ENCODE measurements at regions of chrX and their contacts with region 1.

Region 1: GRCh38 chrX:1453951-1454785 is 1.5 kb upstream of the ASMTL start:
- DNase-seq: peak; percentile 82 to 94 (median 89)
- ATAC-seq: peak; percentile 26
- H3K4me3 ChIP-seq: no peak overlapping the region
- H3K4me3 Mint-ChIP-seq: peak overlapping the region; percentile 49 to 93 (median 68)
- H3K27ac ChIP-seq: peak overlapping the region; percentile 99
- H3K27ac Mint-ChIP-seq: peak overlapping the region in 8 of 9 donors; percentile 68 to 90 (median 80)
- H3K4me1 ChIP-seq: peaks cover 24 to 41% of the 10 kb centered on the region in 2 donors
- H3K4me1 Mint-ChIP-seq: peaks cover 3 to 29% (median 24%) of the 10 kb centered on the region in 7 donors
- H3K27me3 ChIP-seq: no peaks in the 10 kb centered on the region
- H3K27me3 Mint-ChIP-seq: peaks cover 0 to 2% (median 0%) of the 10 kb centered on the region in 5 donors

Region 2: GRCh38 chrX:386768-387575 is 1067.2 kb before region 1 on chrX and contains the start of gene PPP2R3B:
- CTCF ChIA-PET with region 1: no interaction called
- POLR2A ChIA-PET with region 1: no interaction called
- intact Hi-C with region 1: loop called in 1 of 2 experiments (anchors 2 kb)
- DNase-seq: peak; percentile 98 to 100 (median 99)
- ATAC-seq: peak; percentile 93
- H3K4me3 ChIP-seq: peak within 1 kb of the TSS; percentile 99
- H3K4me3 Mint-ChIP-seq: peak within 1 kb of the TSS; percentile 84 to 96 (median 93)
- H3K27ac ChIP-seq: peak within 1 kb of the TSS; percentile 100
- H3K27ac Mint-ChIP-seq: peak within 1 kb of the TSS; percentile 96 to 99 (median 99)
- H3K4me1 ChIP-seq: peaks cover 4 to 5% of the 10 kb centered on the region in 2 donors
- H3K4me1 Mint-ChIP-seq: peaks cover 0 to 20% (median 9%) of the 10 kb centered on the region in 7 donors
- H3K27me3 ChIP-seq: no peaks in the 10 kb centered on the region
- H3K27me3 Mint-ChIP-seq: peaks cover 0 to 5% (median 0%) of the 10 kb centered on the region in 5 donors
- total RNA-seq, gene PPP2R3B: 24.9 to 53.5 (median 32.5) TPM

Region 3: DNA sequence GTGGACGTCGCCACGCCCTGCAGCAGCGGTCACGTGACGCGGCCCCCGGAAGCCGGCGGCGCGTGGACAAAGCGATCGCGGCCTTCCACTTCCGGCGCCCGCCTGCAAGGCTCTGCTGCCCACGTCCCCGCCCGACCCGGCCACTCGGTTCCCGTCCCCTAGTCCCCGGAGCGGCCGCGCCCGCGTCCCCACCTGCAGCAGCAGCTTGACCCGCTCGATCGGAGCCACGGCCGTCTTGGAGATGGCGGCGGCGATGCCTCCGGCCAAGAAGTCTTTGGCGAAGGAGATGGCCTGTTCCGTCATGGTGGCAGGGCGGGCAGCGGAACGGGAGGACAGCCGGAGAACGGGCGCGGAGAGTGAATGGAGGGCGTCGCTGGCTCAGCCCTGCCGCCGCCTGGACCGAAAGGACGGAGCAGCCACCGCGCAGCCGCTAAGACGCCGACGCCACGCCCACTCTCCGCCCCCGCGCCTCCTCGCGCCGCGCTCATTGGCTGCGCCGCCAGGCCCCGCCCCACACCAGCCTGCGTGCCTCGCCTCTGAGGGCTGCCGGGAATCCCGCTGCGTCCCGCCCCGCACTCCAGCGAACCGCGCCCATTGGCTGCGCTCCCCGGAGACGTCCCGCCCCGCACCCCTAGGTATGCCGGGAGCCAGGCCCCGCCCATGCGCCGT is 62.3 kb before region 1 on chrX and contains the start of gene SLC25A6:
- CTCF ChIA-PET with region 1: no interaction called
- POLR2A ChIA-PET with region 1: no interaction called
- intact Hi-C with region 1: loop called (anchors 1 kb)
- DNase-seq: peak; percentile 97 to 100 (median 100)
- ATAC-seq: peak; percentile 96
- H3K4me3 ChIP-seq: peak within 1 kb of the TSS; percentile 94
- H3K4me3 Mint-ChIP-seq: peak within 1 kb of the TSS; percentile 78 to 95 (median 92)
- H3K27ac ChIP-seq: peak within 1 kb of the TSS; percentile 97
- H3K27ac Mint-ChIP-seq: peak within 1 kb of the TSS; percentile 84 to 98 (median 91)
- H3K4me1 ChIP-seq: peaks cover 25 to 33% of the 10 kb centered on the region in 2 donors
- H3K4me1 Mint-ChIP-seq: peaks cover 35 to 71% (median 52%) of the 10 kb centered on the region in 7 donors
- H3K27me3 ChIP-seq: no peaks in the 10 kb centered on the region
- H3K27me3 Mint-ChIP-seq: no peaks in the 10 kb centered on the region
- total RNA-seq, gene SLC25A6: 238 to 341 (median 270) TPM

Region 4: GRCh38 chrX:1491851-1492349 is 37.7 kb after region 1 on chrX:
- CTCF ChIA-PET with region 1: no interaction called
- POLR2A ChIA-PET with region 1: no interaction called
- intact Hi-C with region 1: loop called (anchors 2 to 5 kb)
- DNase-seq: peak in 8 of 9 donors; percentile 46 to 73 (median 54)
- ATAC-seq: peak; percentile 82
- H3K4me3 ChIP-seq: no peak overlapping the region
- H3K4me3 Mint-ChIP-seq: peak overlapping the region in 1 of 10 donors; percentile 30
- H3K27ac ChIP-seq: no peak overlapping the region
- H3K27ac Mint-ChIP-seq: peak overlapping the region in 8 of 9 donors; percentile 72 to 90 (median 84)
- H3K4me1 ChIP-seq: no peaks in the 10 kb centered on the region
- H3K4me1 Mint-ChIP-seq: peaks cover 20 to 56% (median 34%) of the 10 kb centered on the region in 7 donors
- H3K27me3 ChIP-seq: no peaks in the 10 kb centered on the region
- H3K27me3 Mint-ChIP-seq: peaks cover 0 to 2% (median 0%) of the 10 kb centered on the region in 5 donors

Region 5: DNA sequence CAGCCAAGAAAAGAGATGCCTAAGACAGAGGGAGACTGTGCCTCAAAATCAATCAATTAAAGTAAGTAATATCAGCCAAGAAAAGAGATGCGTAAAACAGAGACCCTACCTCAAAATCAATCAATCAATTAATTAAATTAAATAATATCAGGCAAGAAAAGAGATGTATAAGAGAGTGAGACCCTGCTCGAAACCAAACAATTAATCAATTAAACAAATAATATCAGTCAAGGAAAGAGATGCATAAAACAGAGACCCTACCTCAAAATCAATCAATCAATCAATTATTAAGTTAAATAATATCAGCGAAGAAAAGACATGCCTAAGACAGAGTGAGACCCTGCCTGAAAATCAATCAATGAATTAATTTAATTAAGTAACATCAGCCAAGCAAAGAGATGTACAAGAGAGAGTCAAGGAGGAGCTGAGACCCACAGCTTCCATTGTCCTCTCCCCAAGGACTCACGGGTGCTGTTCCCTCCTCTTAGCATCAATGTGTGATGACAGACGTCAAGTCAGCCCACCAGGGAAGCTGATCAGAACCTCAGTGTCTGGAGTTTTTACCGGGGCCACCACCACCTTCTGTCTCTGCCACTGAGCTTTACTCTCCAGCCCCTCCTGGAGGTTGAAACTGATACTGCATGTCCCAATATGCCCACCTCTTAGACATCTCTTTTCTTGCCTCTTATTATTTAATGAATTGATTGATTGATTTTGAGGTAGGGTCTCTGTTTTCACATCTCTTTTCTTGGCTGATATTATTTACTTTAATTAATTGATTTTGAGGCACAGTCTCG is 126.8 kb after region 1 on chrX:
- CTCF ChIA-PET with region 1: no interaction called
- POLR2A ChIA-PET with region 1: no interaction called
- intact Hi-C with region 1: loop called (anchors 1 kb)
- DNase-seq: peak; percentile 42 to 75 (median 67)
- ATAC-seq: peak; percentile 89
- H3K4me3 ChIP-seq: no peak overlapping the region
- H3K4me3 Mint-ChIP-seq: peak overlapping the region in 5 of 10 donors; percentile 16 to 60 (median 50)
- H3K27ac ChIP-seq: no peak overlapping the region
- H3K27ac Mint-ChIP-seq: peak overlapping the region in 7 of 9 donors; percentile 11 to 83 (median 57)
- H3K4me1 ChIP-seq: peaks cover 33 to 36% of the 10 kb centered on the region in 2 donors
- H3K4me1 Mint-ChIP-seq: peaks cover 17 to 36% (median 28%) of the 10 kb centered on the region in 7 donors
- H3K27me3 ChIP-seq: no peaks in the 10 kb centered on the region
- H3K27me3 Mint-ChIP-seq: no peaks in the 10 kb centered on the region

Region 6: GRCh38 chrX:2500267-2501075 is 1046.3 kb after region 1 on chrX and contains the starts of genes DHRSX and ZBED1:
- CTCF ChIA-PET with region 1: no interaction called
- POLR2A ChIA-PET with region 1: no interaction called
- intact Hi-C with region 1: loop called (anchors 1 to 5 kb)
- DNase-seq: peak; percentile 16 to 71 (median 40)
- ATAC-seq: peak; percentile 78
- H3K4me3 ChIP-seq: peak within 1 kb of the TSS; percentile 65
- H3K4me3 Mint-ChIP-seq: peak within 1 kb of the TSS; percentile 75 to 90 (median 89)
- H3K27ac ChIP-seq: peak within 1 kb of the TSS; percentile 77
- H3K27ac Mint-ChIP-seq: peak within 1 kb of the TSS; percentile 81 to 94 (median 88)
- H3K4me1 ChIP-seq: peaks cover 0 to 10% of the 10 kb centered on the region in 2 donors
- H3K4me1 Mint-ChIP-seq: peaks cover 15 to 39% (median 29%) of the 10 kb centered on the region in 7 donors
- H3K27me3 ChIP-seq: no peaks in the 10 kb centered on the region
- H3K27me3 Mint-ChIP-seq: no peaks in the 10 kb centered on the region
- total RNA-seq, gene DHRSX: 15.6 to 26.2 (median 20.4) TPM
- total RNA-seq, gene ZBED1: 23.7 to 37.0 (median 27.4) TPM

Region 7: DNA sequence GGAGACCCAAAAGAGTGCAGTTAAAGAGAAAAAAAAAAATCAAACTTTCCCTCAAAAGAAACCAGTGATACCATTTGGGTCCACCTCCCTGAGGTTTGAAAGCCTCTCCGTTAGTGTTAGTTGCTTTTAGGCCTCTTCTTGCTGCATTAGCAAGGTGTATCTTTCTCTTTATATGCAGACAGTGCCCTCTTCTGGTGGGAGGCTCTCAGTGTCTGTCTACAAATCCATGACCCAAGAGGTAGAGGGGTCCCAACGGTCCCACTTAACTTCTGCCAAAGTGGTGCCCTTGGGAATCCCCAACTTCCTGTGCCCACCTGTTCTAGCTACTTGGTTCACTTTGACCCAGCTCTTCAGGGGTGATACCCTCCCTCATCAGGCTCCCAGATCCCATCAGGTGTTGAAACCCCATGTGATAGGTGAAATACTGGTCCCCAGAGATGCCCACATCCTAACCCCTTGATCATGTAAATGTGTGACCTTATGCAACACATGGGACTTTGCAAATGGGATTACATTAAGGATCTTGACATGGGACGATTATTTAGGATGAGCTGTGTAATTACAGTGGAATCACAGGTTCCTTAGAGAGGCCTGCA is 1173.2 kb after region 1 on chrX:
- CTCF ChIA-PET with region 1: no interaction called
- POLR2A ChIA-PET with region 1: no interaction called
- intact Hi-C with region 1: loop called in 1 of 2 experiments (anchors 1 kb)
- DNase-seq: peak in 7 of 9 donors; percentile 34 to 49 (median 40)
- ATAC-seq: peak; percentile 61
- H3K4me3 ChIP-seq: no peak overlapping the region
- H3K4me3 Mint-ChIP-seq: peak overlapping the region in 3 of 10 donors; percentile 19 to 33 (median 20)
- H3K27ac ChIP-seq: no peak overlapping the region
- H3K27ac Mint-ChIP-seq: peak overlapping the region in 6 of 9 donors; percentile 28 to 100 (median 56)
- H3K4me1 ChIP-seq: peaks cover 16% of the 10 kb centered on the region in 2 donors
- H3K4me1 Mint-ChIP-seq: peaks cover 23 to 53% (median 51%) of the 10 kb centered on the region in 7 donors
- H3K27me3 ChIP-seq: no peaks in the 10 kb centered on the region
- H3K27me3 Mint-ChIP-seq: no peaks in the 10 kb centered on the region